ENCODE measurements at regions of chr1 and their contacts with region 1.

Region 1: DNA sequence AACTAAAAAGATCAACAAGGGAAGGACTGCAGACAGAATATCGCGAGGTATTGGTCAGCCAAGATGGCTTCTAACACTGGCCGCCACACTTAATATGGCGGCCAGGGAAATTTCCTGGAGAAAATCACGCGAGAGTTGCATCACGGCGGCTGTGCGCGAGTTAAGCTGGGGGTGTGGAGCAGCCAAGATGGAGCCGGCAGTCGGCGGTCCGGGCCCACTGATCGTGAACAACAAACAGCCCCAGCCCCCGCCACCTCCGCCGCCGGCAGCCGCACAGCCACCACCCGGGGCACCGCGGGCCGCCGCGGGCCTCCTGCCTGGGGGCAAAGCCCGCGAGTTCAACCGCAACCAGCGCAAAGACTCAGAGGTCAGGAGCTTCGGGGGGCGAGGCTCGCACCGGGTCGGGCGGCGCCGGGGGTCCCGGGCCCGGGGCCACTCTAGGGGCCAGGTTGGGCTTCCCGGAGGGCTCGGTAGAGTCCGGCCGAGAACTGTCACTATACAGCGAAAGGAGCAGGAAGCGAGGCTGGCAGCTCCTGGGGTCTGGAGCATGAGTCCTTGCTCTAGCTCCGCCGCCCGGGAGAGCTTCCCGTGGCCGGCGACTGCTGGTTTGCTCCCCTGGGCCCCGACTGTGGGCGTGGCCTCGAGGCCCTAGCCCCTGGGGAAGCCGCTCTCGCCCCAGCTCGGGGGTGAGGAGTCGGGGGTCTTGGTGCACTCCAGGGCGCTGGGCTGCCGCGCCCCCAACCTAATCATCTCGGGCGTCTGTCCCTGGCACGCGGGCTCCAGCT is at the start of gene STRIP1:
- DNase-seq: peak; percentile 91 to 95
- ATAC-seq: peak; percentile 96 to 98 (median 97)
- H3K4me3 ChIP-seq: peak within 1 kb of the TSS; percentile 88 to 100 (median 96)
- H3K27ac ChIP-seq: peak within 1 kb of the TSS; percentile 83 to 98 (median 94)
- H3K4me1 ChIP-seq: peaks cover 0 to 40% (median 21%) of the 10 kb centered on the region in 9 donors
- H3K27me3 ChIP-seq: no peaks in the 10 kb centered on the region
- CTCF ChIP-seq: no peak
- total RNA-seq, gene STRIP1: 13.9 to 23.2 (median 18.9) TPM

Region 2: DNA sequence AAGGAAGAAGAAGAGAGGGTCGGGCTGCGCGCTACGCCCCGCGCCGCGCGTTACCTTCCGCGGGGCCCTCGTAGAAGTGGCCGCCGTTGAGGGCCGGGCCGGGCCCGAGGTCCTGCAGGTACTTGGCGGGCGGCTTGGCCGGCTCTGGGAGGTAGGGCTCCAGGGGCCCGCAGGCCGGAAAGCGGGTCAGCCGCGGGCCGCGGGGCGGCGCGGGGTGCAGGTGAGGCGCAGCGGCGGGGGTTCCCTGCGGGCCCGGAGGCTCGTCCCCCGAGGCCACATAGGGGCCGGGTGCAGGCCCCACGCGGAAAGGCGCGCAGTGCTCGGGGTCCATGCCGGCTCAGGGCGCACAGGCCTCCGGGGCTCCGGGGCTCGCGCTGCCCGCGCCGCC is 35.6 kb after region 1 on chr1:
- intact Hi-C with region 1: no loop called
- DNase-seq: no peak
- ATAC-seq: peak in 4 of 8 donors; percentile 7 to 23 (median 12)
- H3K4me3 ChIP-seq: peak overlapping the region in 9 of 10 donors; percentile 3 to 42 (median 29)
- H3K27ac ChIP-seq: no peak overlapping the region
- H3K4me1 ChIP-seq: peaks cover 0 to 33% (median 27%) of the 10 kb centered on the region in 9 donors
- H3K27me3 ChIP-seq: peaks cover 35 to 92% (median 79%) of the 10 kb centered on the region in 7 donors
- CTCF ChIP-seq: no peak

Region 3: GRCh38 chr1:110081061-110081460 is 46.4 kb after region 1 on chr1:
- intact Hi-C with region 1: no loop called
- DNase-seq: no peak
- ATAC-seq: no peak
- H3K4me3 ChIP-seq: no peak overlapping the region
- H3K27ac ChIP-seq: no peak overlapping the region
- H3K4me1 ChIP-seq: peaks cover 8 to 25% (median 15%) of the 10 kb centered on the region in 9 donors
- H3K27me3 ChIP-seq: peaks cover 0 to 71% (median 48%) of the 10 kb centered on the region in 7 donors
- CTCF ChIP-seq: no peak

Region 4: DNA sequence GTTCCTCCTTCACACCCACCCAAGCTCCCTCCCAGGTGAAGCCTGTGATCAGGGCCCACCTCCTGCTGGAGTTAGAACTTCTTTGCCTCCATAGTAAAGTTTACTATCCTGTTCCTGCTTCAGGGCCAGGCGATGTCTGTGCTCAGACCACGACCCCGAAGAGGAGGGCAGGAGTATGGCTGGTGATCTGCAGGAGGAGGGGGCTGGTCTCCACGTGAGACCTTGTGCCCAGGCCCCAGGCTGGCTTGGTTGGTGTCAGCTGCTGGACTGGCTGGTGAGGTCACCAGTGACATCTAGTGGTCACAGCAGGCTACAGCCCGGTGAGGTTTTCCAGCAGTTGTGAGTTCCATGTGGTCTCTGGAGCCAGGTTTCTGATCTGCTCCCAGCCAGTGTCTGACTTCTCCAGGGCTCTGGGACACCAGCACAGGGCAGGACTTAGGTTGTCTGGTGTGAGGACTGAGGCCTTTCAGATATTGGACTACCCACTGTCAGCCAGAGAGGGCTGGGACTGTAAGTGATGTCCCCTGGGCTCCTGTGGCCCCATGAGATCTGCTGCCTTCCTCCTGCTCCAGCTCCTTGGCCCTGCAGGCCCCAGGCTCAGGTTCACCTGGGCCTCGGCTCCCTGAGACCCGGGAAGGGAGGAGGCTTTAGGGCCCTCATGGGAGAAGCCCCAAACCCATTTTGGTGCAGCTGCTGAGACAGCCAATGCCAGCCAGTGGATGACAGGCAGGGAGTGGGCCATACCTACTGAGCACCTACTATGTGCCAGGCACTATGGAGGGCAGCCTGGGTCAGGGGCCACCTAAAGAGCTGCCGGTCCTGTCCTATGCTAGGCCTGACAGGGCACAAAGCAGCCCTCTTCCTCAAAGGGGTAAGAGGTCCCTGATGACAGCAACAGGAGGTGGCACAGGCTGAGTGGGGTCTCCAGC is 71.6 kb after region 1 on chr1:
- intact Hi-C with region 1: loop called in 2 of 10 experiments (anchors 1 to 5 kb)
- DNase-seq: peak; percentile 52 to 69
- ATAC-seq: peak; percentile 50 to 86 (median 84)
- H3K4me3 ChIP-seq: no peak overlapping the region
- H3K27ac ChIP-seq: no peak overlapping the region
- H3K4me1 ChIP-seq: peaks cover 0 to 18% (median 8%) of the 10 kb centered on the region in 9 donors
- H3K27me3 ChIP-seq: peaks cover 0 to 15% (median 0%) of the 10 kb centered on the region in 7 donors
- CTCF ChIP-seq: peak; percentile 84 to 97 (median 94)

Region 5: DNA sequence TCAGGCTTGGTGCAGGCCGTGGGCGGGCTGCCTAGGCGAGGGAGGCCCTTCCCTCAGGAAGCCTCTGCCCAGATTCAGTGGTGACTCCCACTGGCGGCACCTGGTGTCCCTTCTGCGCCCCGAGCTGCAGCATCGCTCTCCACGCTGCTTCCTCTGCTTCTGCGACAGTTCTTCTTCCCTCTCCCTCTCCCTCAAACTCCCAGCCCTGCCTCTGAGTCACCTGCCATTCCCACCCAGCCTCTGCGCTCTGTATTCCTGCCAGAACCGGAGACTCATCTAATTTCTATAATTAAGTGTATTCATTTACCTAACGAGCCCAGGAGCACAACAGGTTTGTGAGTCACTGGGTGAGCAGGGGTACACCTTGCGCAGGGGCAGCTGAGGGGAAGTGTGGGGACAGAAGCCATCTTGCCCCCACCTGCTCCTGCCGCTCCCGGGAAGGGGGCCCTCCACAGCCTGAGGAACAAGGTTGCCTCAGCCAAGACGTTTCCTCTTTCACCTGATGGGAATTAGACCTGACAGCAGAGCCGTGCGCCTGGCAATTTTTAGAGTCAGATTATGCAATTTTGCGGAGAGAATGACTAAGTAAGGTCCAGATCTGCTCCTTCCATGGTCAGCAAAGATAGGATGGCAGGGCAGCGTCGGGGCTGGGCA is 194.8 kb after region 1 on chr1:
- intact Hi-C with region 1: no loop called
- DNase-seq: no peak
- ATAC-seq: no peak
- H3K4me3 ChIP-seq: no peak overlapping the region
- H3K27ac ChIP-seq: no peak overlapping the region
- H3K4me1 ChIP-seq: peaks cover 0 to 3% (median 0%) of the 10 kb centered on the region in 9 donors
- H3K27me3 ChIP-seq: no peaks in the 10 kb centered on the region
- CTCF ChIP-seq: no peak

Region 6: DNA sequence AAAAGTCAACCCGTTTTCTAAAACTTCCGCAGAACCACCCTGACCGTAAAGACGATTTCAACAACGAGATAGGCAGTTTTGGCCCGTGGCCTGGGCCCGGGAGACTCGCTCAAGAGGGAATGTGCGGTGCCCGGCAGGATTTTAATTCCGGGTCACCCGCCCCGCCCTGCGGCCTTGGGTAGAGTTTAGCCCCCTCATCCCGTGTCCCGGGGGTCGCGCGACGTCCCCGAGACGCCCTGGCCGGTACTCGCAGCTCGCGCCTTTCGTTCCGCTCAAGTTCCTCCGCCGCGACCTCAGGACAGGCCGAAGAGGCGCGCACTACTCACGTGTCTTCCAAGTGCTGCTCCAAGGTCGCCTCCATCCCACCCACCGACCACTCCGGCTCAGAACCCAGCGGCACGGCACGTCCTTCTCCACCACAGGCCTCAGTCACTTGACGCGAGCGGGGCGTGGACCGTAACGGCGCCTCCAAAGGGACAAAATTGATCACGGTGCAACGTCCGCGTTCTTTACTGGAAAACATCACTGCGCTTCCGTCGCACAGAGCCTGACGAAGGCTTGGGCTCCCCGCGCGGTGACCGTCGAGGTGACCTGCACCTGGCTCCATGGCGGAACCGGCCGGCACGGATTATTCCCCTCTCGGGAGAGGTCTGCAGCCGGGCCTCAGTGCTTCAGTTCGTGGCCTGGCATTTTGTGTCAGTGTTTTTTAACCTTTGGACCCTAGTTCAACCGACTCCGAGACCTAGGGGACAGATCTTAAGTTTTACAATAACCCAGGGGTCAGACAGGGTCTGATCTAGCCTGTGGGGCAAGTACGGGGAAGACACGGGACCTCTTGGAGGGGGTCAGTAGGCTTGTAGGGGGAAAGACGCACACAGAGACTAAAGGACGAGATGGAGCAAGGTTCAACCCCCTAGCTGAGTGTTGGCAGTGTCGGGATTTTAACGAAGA is 372.9 kb after region 1 on chr1 and contains the start of gene LAMTOR5:
- intact Hi-C with region 1: loop called in 1 of 10 experiments (anchors 5 kb)
- DNase-seq: peak; percentile 92 to 97
- ATAC-seq: peak; percentile 95 to 99 (median 98)
- H3K4me3 ChIP-seq: peak within 1 kb of the TSS; percentile 52 to 99 (median 78)
- H3K27ac ChIP-seq: peak within 1 kb of the TSS; percentile 83 to 98 (median 94)
- H3K4me1 ChIP-seq: peaks cover 2 to 35% (median 24%) of the 10 kb centered on the region in 9 donors
- H3K27me3 ChIP-seq: no peaks in the 10 kb centered on the region
- CTCF ChIP-seq: peak in 5 of 9 donors; percentile 15 to 38 (median 27)
- total RNA-seq, gene LAMTOR5: 209 to 268 (median 245) TPM